ENCODE measurements at regions of chr5 and their contacts with region 1.

Region 1: GRCh38 chr5:163401271-163401670 is 36.1 kb upstream of the CCNG1 start:
- DNase-seq: no peak
- ATAC-seq: no peak
- H3K4me3 ChIP-seq: no peak overlapping the region
- H3K27ac ChIP-seq: no peak overlapping the region
- H3K4me1 ChIP-seq: no peaks in the 10 kb centered on the region
- CTCF ChIP-seq: no peak
- EP300 ChIP-seq: no peak
- POLR2A ChIP-seq: no peak
- RAD21 ChIP-seq: no peak

Region 2: DNA sequence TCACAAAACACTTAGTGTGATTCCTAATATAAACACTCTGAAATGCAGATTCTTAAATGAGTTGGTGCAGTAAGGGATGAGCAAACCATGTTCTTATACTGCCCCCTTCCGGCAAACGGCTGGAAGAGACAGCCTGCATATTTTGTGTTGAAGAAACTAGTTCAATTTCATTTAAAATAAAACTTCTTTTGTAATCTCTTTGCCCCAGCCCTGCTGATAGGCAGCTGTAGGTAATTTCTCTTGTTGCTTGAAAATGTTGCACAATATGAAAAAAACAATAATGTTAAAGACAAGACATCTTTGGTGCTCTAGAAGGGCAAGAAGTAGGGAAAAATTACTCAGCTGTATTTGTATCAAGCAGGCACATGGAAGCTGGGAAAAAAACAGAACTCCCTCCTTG is 53.6 kb before region 1 on chr5:
- CTCF ChIA-PET with region 1: interaction called, 10 read pairs
- POLR2A ChIA-PET with region 1: no interaction called
- DNase-seq: peak; percentile 43 to 70
- ATAC-seq: peak; percentile 57 to 85; a peak in 3 of 6 replicates
- H3K4me3 ChIP-seq: no peak overlapping the region
- H3K27ac ChIP-seq: no peak overlapping the region
- H3K4me1 ChIP-seq: peaks cover 8% of the 10 kb centered on the region; the same call in 2 of the 3 replicates
- CTCF ChIP-seq: peak; percentile 90
- EP300 ChIP-seq: no peak
- POLR2A ChIP-seq: no peak
- RAD21 ChIP-seq: peak; percentile 91 to 92